Endothelial cell of umbilical vein (primary cell): ENCODE measurements at regions of chr15 and their contacts with region 1.

Region 1: GRCh38 chr15:57923306-57923705 is 142.2 kb downstream of the ALDH1A2 start:
- DNase-seq: peak; percentile 90
- H3K4me3 ChIP-seq: peak overlapping the region in 1 of 3 experiments; percentile 39
- H3K27ac ChIP-seq: peak overlapping the region; percentile 63
- H3K4me1 ChIP-seq: peaks cover 39% of the 10 kb centered on the region
- H3K27me3 ChIP-seq: no peaks in the 10 kb centered on the region
- CTCF ChIP-seq: no peak
- POLR2A ChIP-seq: no peak

Region 2: GRCh38 chr15:57866149-57866736 is 57.1 kb before region 1 on chr15:
- CTCF ChIA-PET with region 1: interaction called, 19 read pairs
- POLR2A ChIA-PET with region 1: no interaction called
- dilution Hi-C with region 1: no loop called
- intact Hi-C with region 1: loop called (anchors 5 kb)
- DNase-seq: peak; percentile 72
- H3K4me3 ChIP-seq: no peak overlapping the region
- H3K27ac ChIP-seq: no peak overlapping the region
- H3K4me1 ChIP-seq: peaks cover 8% of the 10 kb centered on the region
- H3K27me3 ChIP-seq: no peaks in the 10 kb centered on the region
- CTCF ChIP-seq: peak; percentile 84 to 85
- POLR2A ChIP-seq: no peak

Region 3: GRCh38 chr15:57873564-57874209 is 49.6 kb before region 1 on chr15:
- CTCF ChIA-PET with region 1: interaction called, 5 read pairs
- POLR2A ChIA-PET with region 1: no interaction called
- dilution Hi-C with region 1: no loop called
- intact Hi-C with region 1: loop called (anchors 5 kb)
- DNase-seq: peak; percentile 57
- H3K4me3 ChIP-seq: no peak overlapping the region
- H3K27ac ChIP-seq: peak overlapping the region; percentile 40
- H3K4me1 ChIP-seq: peaks cover 25% of the 10 kb centered on the region
- H3K27me3 ChIP-seq: no peaks in the 10 kb centered on the region
- CTCF ChIP-seq: no peak
- POLR2A ChIP-seq: no peak

Region 4: DNA sequence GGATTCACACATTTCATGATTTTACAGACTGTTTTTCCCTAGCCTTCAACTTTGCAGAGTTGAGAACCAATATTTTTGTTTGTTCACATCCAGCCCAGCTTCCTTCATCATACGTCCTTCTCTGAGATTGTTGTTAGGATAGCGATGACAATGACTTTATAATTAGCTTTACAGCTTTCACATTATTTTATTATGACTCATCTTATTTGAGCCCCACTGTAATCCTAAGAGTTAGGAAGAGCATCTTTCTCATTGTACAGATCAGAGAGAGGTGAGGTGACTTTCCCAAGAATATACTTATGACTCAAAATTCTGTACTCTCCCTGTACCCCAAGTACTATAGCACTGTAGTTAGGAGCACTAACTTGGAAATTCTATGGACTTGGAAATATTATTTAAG is 13.9 kb before region 1 on chr15:
- CTCF ChIA-PET with region 1: interaction called, 6 read pairs
- POLR2A ChIA-PET with region 1: no interaction called
- dilution Hi-C with region 1: no loop called
- intact Hi-C with region 1: loop called (anchors 2 kb)
- DNase-seq: peak; percentile 33
- H3K4me3 ChIP-seq: no peak overlapping the region
- H3K27ac ChIP-seq: no peak overlapping the region
- H3K4me1 ChIP-seq: peaks cover 7% of the 10 kb centered on the region
- H3K27me3 ChIP-seq: no peaks in the 10 kb centered on the region
- CTCF ChIP-seq: no peak
- POLR2A ChIP-seq: no peak

Region 5: GRCh38 chr15:58002338-58003126 is 79.2 kb after region 1 on chr15:
- CTCF ChIA-PET with region 1: no interaction called
- POLR2A ChIA-PET with region 1: no interaction called
- dilution Hi-C with region 1: no loop called
- intact Hi-C with region 1: no loop called
- DNase-seq: no peak
- H3K4me3 ChIP-seq: no peak overlapping the region
- H3K27ac ChIP-seq: no peak overlapping the region
- H3K4me1 ChIP-seq: no peaks in the 10 kb centered on the region
- H3K27me3 ChIP-seq: no peaks in the 10 kb centered on the region
- CTCF ChIP-seq: no peak
- POLR2A ChIP-seq: no peak

Region 6: GRCh38 chr15:58065445-58066041 is 142.2 kb after region 1 on chr15 and contains the start of gene ALDH1A2:
- CTCF ChIA-PET with region 1: interaction called, 14 read pairs
- POLR2A ChIA-PET with region 1: no interaction called
- dilution Hi-C with region 1: no loop called
- intact Hi-C with region 1: loop called (anchors 2 kb)
- DNase-seq: peak; percentile 72
- H3K4me3 ChIP-seq: peak within 1 kb of the TSS; percentile 61 to 92 (median 80)
- H3K27ac ChIP-seq: peak within 1 kb of the TSS; percentile 70
- H3K4me1 ChIP-seq: peaks cover 20% of the 10 kb centered on the region
- H3K27me3 ChIP-seq: no peaks in the 10 kb centered on the region
- CTCF ChIP-seq: no peak
- POLR2A ChIP-seq: no peak
- total RNA-seq, gene ALDH1A2: 11.7 and 34.9 TPM in 2 replicates